ENCODE measurements at regions of chr3 and their contacts with region 1.

Region 1: DNA sequence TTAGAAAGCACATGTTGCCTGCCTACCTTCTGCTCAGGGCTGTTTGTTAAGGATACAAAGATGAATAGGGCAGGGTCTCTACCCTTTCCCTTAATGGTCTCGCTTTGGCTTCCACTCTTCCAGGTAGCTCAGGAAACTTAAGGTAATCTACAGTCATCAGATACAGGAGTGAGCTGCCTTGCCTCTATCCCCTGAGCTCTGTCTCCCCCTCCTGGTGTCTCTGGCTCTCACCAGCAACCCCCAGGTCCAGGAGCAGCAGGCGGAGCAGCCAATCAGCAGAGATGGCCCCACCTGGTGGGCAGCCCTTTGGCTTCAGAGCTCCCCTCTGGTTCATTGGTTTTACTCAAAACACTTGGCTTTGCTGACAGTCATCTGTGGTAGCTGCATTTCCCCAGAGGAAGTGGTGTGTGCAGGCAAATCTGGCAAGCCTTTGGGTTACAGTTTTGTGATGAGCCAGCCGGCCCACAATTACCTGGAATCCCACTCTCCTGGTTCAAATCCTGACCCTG is 8.5 kb upstream of the CX3CR1 start:
- DNase-seq: peak; percentile 61 to 91 (median 72)
- ATAC-seq: peak; percentile 94
- H3K4me3 ChIP-seq: no peak overlapping the region
- H3K4me3 Mint-ChIP-seq: no peak overlapping the region
- H3K27ac ChIP-seq: no peak overlapping the region
- H3K27ac Mint-ChIP-seq: no peak overlapping the region
- H3K4me1 ChIP-seq: peaks cover 22% of the 10 kb centered on the region
- H3K4me1 Mint-ChIP-seq: peaks cover 12% of the 10 kb centered on the region
- H3K27me3 ChIP-seq: no peaks in the 10 kb centered on the region
- H3K27me3 Mint-ChIP-seq: no peaks in the 10 kb centered on the region
- CTCF ChIP-seq: peak; percentile 92

Region 2: GRCh38 chr3:38496131-38496910 is 792.0 kb before region 1 on chr3 and contains the start of gene EXOG:
- CTCF ChIA-PET with region 1: interaction called, 7 read pairs
- POLR2A ChIA-PET with region 1: no interaction called
- intact Hi-C with region 1: loop called in 1 of 2 experiments (anchors 10 kb)
- DNase-seq: peak; percentile 92 to 97 (median 95)
- ATAC-seq: peak; percentile 92
- H3K4me3 ChIP-seq: peak within 1 kb of the TSS; percentile 93
- H3K4me3 Mint-ChIP-seq: peak within 1 kb of the TSS; percentile 90
- H3K27ac ChIP-seq: peak within 1 kb of the TSS in 1 of 2 donors; percentile 27
- H3K27ac Mint-ChIP-seq: peak within 1 kb of the TSS; percentile 59
- H3K4me1 ChIP-seq: peaks cover 10% of the 10 kb centered on the region
- H3K4me1 Mint-ChIP-seq: peaks cover 31% of the 10 kb centered on the region
- H3K27me3 ChIP-seq: no peaks in the 10 kb centered on the region
- H3K27me3 Mint-ChIP-seq: no peaks in the 10 kb centered on the region
- CTCF ChIP-seq: peak; percentile 89
- total RNA-seq, gene EXOG: 13.7 to 16.0 TPM

Region 3: GRCh38 chr3:39088889-39089288 is 199.5 kb before region 1 on chr3:
- CTCF ChIA-PET with region 1: interaction called, 11 read pairs
- POLR2A ChIA-PET with region 1: no interaction called
- intact Hi-C with region 1: no loop called
- DNase-seq: no peak
- ATAC-seq: no peak
- H3K4me3 ChIP-seq: no peak overlapping the region
- H3K4me3 Mint-ChIP-seq: no peak overlapping the region
- H3K27ac ChIP-seq: no peak overlapping the region
- H3K27ac Mint-ChIP-seq: no peak overlapping the region
- H3K4me1 ChIP-seq: no peaks in the 10 kb centered on the region
- H3K4me1 Mint-ChIP-seq: no peaks in the 10 kb centered on the region
- H3K27me3 ChIP-seq: no peaks in the 10 kb centered on the region
- H3K27me3 Mint-ChIP-seq: no peaks in the 10 kb centered on the region
- CTCF ChIP-seq: no peak

Region 4: DNA sequence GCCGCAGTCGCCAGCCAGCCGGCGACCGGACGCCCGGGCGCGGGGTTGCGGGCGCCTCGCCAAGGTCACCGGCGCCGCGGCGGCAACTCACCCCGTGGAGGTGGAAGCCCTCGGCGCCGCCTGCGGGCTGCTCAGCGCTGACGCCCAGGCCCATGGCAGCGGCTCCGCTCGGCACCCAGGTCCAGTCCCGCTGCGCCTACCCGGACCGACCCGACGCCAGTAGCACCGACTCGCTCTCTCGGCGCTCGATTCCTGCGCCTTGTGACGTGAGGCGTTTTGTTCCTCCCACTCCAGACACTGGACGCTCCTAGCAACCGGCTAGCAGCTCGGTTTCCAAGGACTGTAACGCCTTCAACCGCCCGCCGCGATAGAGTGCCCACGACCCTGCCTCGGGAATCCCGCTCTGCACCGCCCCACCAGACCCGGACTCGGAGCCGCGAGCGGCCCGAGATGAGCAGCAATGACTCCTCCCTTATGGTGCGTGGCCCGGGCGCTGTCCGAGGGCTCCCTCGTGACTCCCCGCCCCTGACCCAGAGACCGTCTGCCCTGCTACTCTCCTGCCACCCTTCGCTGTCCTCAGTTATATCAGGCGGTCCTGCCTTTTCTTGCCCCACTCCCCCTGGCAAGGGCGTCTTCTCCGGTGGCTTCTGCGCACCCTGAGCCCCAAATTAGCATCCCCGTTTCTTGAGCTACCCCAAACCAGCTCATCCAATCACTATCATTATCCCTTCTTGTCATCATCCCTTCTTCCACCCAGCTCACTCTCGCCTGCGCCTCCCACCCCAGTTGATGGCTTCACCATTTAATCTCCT is 180.8 kb before region 1 on chr3 and contains the starts of genes GORASP1 and TTC21A:
- CTCF ChIA-PET with region 1: interaction called, 24 read pairs
- POLR2A ChIA-PET with region 1: interaction called, 3 read pairs
- intact Hi-C with region 1: no loop called
- DNase-seq: peak in 13 of 14 experiments; percentile 33 to 84 (median 62)
- ATAC-seq: peak; percentile 71
- H3K4me3 ChIP-seq: peak within 1 kb of the TSS; percentile 96
- H3K4me3 Mint-ChIP-seq: peak within 1 kb of the TSS; percentile 97
- H3K27ac ChIP-seq: peak within 1 kb of the TSS; percentile 56 to 57
- H3K27ac Mint-ChIP-seq: peak within 1 kb of the TSS; percentile 81
- H3K4me1 ChIP-seq: peaks cover 54% of the 10 kb centered on the region
- H3K4me1 Mint-ChIP-seq: peaks cover 50% of the 10 kb centered on the region
- H3K27me3 ChIP-seq: no peaks in the 10 kb centered on the region
- H3K27me3 Mint-ChIP-seq: no peaks in the 10 kb centered on the region
- CTCF ChIP-seq: no peak
- total RNA-seq, gene GORASP1: 29.1 to 31.5 TPM
- total RNA-seq, gene TTC21A: 4.1 to 5.2 TPM

Region 5: GRCh38 chr3:39189959-39190269 is 98.4 kb before region 1 on chr3:
- CTCF ChIA-PET with region 1: interaction called, 22 read pairs
- POLR2A ChIA-PET with region 1: interaction called, 4 read pairs
- intact Hi-C with region 1: loop called (anchors 1 kb)
- DNase-seq: peak in 13 of 14 experiments; percentile 21 to 81 (median 39)
- ATAC-seq: peak; percentile 82
- H3K4me3 ChIP-seq: no peak overlapping the region
- H3K4me3 Mint-ChIP-seq: no peak overlapping the region
- H3K27ac ChIP-seq: no peak overlapping the region
- H3K27ac Mint-ChIP-seq: no peak overlapping the region
- H3K4me1 ChIP-seq: peaks cover 6% of the 10 kb centered on the region
- H3K4me1 Mint-ChIP-seq: no peaks in the 10 kb centered on the region
- H3K27me3 ChIP-seq: no peaks in the 10 kb centered on the region
- H3K27me3 Mint-ChIP-seq: no peaks in the 10 kb centered on the region
- CTCF ChIP-seq: peak; percentile 78

Region 6: DNA sequence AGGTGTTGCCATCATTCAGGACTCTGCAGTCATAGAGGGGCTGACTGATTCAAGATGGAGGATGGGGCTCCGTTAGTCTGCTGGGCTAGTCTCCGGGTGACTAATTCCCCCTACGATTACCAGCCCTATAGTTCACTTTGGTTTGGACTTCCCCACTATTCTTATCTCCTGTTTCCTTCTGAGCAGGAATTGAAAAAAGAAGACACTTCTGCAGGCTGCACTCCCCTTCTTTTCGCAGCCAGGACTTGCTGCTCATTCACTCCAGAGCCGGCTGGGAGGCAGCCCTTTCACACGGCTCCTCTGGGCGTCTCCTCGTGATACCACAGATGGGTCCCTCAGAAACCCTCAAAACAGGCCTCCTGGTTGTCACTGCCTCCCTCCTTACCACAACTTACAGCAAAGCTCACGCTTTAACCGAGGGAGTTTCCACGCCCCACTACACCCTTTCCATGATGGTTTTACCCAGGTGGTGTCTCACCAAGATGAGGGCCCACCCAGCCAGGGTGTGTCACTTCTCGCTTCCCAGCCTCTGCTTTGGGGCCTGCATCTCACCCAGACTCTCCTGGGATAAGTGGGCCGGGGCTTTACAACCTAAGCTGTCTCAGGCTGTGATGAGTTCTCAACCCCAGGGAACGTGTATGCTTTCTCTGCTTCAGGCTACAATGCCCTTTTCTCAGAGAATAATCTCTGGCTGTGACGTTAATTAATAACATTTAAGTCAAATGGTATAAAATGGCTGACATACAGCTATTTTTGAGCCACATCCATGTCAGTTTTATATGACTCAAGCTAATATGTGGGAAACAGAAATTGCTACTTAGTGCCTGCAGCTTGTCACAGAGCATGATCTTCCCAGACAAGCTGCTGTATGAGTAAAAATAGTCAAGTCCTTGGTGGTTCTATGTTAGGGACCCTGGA is 20.5 kb before region 1 on chr3:
- CTCF ChIA-PET with region 1: interaction called, 17 read pairs
- POLR2A ChIA-PET with region 1: no interaction called
- intact Hi-C with region 1: no loop called
- DNase-seq: peak in 13 of 14 experiments; percentile 10 to 91 (median 46)
- ATAC-seq: peak; percentile 90
- H3K4me3 ChIP-seq: no peak overlapping the region
- H3K4me3 Mint-ChIP-seq: peak overlapping the region; percentile 40
- H3K27ac ChIP-seq: peak overlapping the region; percentile 29 to 49
- H3K27ac Mint-ChIP-seq: peak overlapping the region; percentile 82
- H3K4me1 ChIP-seq: peaks cover 28% of the 10 kb centered on the region
- H3K4me1 Mint-ChIP-seq: peaks cover 21% of the 10 kb centered on the region
- H3K27me3 ChIP-seq: no peaks in the 10 kb centered on the region
- H3K27me3 Mint-ChIP-seq: no peaks in the 10 kb centered on the region
- CTCF ChIP-seq: no peak